ENCODE measurements at regions of chr19 and their contacts with region 1.

Region 1: DNA sequence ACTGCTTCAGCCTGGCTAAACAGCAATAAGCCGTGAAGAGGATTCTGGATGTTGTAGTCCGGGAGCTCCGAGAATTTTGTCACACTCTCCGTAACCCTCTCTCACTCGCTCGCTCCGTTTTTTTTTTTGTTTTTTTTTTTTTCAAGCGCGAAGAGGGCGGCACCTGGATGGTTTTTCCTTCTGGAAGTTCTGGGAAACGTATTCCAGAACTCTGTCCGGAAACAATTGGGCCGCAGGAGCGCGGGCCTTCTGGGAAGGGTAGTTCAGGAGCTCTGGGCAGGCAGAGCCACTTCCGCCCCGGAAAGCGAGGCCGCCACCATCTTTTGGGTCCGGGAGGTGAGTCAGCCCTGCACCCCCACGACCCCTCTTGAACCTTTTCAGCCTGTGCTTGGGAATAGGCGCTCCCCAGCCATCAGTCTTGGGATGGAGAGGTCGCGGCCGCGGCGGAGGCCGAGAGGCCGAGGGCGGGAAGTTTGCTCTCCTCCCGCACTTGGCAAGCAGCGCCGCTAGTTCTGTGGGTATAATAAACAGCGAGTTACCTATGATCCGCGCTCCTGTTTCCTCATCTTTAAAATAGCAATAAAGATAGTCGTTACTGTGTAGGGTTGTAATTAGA is at the start of gene ZNF227:
- H3K4me3 Mint-ChIP-seq: peak within 1 kb of the TSS; percentile 93
- H3K27ac Mint-ChIP-seq: peak within 1 kb of the TSS; percentile 91
- H3K4me1 Mint-ChIP-seq: peaks cover 16% of the 10 kb centered on the region
- H3K27me3 Mint-ChIP-seq: no peaks in the 10 kb centered on the region

Region 2: DNA sequence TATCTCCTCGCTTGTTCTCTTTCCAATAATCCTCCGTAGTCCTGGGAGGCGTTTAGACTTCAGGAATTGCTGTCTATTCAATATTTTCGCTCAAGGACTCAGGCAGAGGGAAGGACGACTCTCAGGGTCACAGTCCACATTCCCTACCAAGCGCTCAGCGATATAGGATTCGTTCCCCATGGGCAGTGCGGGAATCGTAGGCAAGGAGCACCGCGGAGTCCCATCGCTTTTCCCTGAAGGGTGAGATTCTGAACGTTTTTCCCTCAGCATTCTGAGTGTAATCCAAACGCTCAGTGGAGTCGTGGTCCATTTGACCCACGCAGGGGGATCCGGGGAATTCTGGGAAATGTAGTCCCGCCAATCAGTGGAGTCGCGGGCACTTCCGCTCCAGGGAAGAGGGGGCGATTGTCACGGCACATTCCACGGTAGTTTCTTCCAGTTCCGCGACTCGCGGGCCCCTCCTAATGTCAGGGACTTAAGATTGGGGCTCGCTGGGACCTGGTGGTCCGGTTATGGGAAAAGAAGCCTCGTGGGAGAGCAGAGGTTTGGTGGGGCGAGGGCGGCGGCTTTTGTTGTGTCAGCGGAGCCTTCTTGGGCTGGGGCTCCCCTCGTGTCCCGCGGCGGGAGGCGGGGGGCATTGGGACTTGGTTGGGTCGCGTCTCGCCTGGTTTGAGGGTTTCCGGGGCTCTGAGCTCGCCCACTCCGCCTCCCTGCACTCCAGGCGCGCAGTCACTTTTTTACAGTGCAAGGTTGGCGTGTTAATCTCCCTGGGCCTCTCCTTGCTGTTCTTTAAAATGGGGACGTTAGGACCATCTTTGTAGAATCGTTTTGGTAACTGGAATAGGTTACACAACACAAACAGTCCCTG is 70.9 kb before region 1 on chr19 and contains the start of gene ZNF234:
- intact Hi-C with region 1: loop called (anchors 2 kb)
- H3K4me3 Mint-ChIP-seq: peak within 1 kb of the TSS; percentile 98
- H3K27ac Mint-ChIP-seq: peak within 1 kb of the TSS; percentile 98
- H3K4me1 Mint-ChIP-seq: peaks cover 17% of the 10 kb centered on the region
- H3K27me3 Mint-ChIP-seq: peaks cover 3% of the 10 kb centered on the region

Region 3: GRCh38 chr19:44176590-44176989 is 35.8 kb before region 1 on chr19:
- intact Hi-C with region 1: no loop called
- H3K4me3 Mint-ChIP-seq: no peak overlapping the region
- H3K27ac Mint-ChIP-seq: no peak overlapping the region
- H3K4me1 Mint-ChIP-seq: no peaks in the 10 kb centered on the region
- H3K27me3 Mint-ChIP-seq: no peaks in the 10 kb centered on the region

Region 4: GRCh38 chr19:44232867-44233266 is 20.5 kb after region 1 on chr19:
- intact Hi-C with region 1: no loop called
- H3K4me3 Mint-ChIP-seq: no peak overlapping the region
- H3K27ac Mint-ChIP-seq: no peak overlapping the region
- H3K4me1 Mint-ChIP-seq: no peaks in the 10 kb centered on the region
- H3K27me3 Mint-ChIP-seq: no peaks in the 10 kb centered on the region

Region 5: GRCh38 chr19:44260363-44261070 is 48.2 kb after region 1 on chr19:
- intact Hi-C with region 1: no loop called
- H3K4me3 Mint-ChIP-seq: peak overlapping the region; percentile 65
- H3K27ac Mint-ChIP-seq: no peak overlapping the region
- H3K4me1 Mint-ChIP-seq: peaks cover 12% of the 10 kb centered on the region
- H3K27me3 Mint-ChIP-seq: peaks cover 4% of the 10 kb centered on the region

Measured in dendritic cell treated with granulocyte-macrophage colony-stimulating factor and Interleukin-4, amounts not matched to agents 40 ng/mL and 50 ng/mL, for 4 days (primary cell).